ENCODE measurements at regions of chr7 and their contacts with region 1.

Region 1: GRCh38 chr7:53485354-53485753 is 449.9 kb downstream of the POM121L12 start:
- DNase-seq: no peak
- ATAC-seq: no peak
- H3K4me3 ChIP-seq: no peak overlapping the region
- H3K27ac ChIP-seq: no peak overlapping the region
- H3K4me1 ChIP-seq: no peaks in the 10 kb centered on the region
- H3K27me3 ChIP-seq: no peaks in the 10 kb centered on the region
- CTCF ChIP-seq: no peak

Region 2: DNA sequence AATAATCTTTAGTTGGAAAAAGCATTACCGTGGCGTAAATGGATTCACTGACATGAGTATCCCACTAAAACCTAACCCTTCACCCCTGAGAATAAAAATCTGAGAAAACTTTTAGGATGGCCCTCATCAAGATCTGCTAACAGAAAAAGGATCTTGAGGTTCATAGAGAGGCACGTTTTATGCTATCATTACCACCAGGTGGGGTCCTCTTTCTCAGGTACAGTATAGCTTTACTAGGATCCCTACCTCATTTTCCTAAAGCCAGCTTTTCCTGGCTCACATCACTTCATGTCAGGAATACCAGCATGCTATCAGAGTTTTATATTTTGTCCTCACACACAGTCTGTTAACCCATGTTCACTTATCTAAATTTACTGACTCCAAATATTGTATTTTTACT is 276.2 kb before region 1 on chr7:
- intact Hi-C with region 1: no loop called
- DNase-seq: no peak
- ATAC-seq: no peak
- H3K4me3 ChIP-seq: no peak overlapping the region
- H3K27ac ChIP-seq: no peak overlapping the region
- H3K4me1 ChIP-seq: no peaks in the 10 kb centered on the region
- H3K27me3 ChIP-seq: no peaks in the 10 kb centered on the region
- CTCF ChIP-seq: no peak

Region 3: DNA sequence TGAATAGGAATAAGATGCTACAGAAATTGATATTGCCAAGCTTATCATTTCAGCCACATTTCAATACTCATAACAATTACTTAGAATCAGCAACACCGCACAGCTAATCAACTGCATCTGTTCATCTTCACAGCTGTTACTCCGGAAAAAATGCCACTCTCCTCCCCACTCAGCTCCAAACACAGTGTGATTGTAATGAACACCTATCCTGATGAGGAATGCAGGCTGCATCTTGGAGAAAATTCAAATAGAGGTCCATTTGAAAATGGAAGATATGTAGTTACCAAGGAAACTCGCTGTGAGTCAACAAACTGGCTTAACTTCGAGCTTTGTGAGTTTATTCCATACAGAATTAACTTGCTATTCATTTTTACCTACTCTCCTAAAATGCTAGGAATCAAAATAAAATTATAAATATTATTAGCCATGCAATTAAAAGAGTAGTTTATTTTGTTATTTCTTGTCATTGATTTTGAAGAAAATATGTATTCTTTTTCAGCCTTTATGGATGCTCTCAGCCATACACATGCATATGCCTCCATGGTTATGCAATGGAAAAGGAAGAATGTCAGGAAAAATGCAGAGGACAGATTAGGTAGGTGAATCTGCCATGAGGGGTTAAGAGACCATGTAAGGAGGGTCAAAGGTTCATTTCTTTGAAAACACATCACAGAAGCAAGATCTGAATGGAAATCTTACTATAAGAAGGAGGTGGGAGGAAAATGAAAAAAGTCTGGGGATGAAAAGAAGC is 182.7 kb before region 1 on chr7:
- intact Hi-C with region 1: no loop called
- DNase-seq: no peak
- ATAC-seq: no peak
- H3K4me3 ChIP-seq: no peak overlapping the region
- H3K27ac ChIP-seq: no peak overlapping the region
- H3K4me1 ChIP-seq: no peaks in the 10 kb centered on the region
- H3K27me3 ChIP-seq: no peaks in the 10 kb centered on the region
- CTCF ChIP-seq: no peak

Region 4: DNA sequence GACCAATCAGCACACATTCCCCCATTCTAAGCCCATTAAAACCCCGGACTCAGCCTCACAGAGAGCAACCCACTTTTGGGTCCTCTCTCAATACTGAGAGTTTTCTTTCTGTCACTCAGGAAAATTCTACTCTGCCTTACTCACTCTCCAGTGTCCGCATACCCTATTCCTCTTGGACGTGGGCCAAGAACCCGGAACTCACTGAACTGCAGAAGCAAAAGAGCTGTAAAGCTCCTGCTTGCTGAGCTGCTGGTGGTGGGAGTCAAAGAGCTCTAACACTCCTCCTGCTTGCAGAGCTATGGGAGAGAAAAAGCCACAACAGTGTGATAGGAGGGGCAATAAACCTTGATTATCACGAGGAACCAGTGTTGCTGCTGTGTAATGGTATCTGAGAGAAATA is 63.1 kb before region 1 on chr7:
- intact Hi-C with region 1: loop called in 1 of 10 experiments (anchors 10 kb)
- DNase-seq: no peak
- ATAC-seq: no peak
- H3K4me3 ChIP-seq: no peak overlapping the region
- H3K27ac ChIP-seq: no peak overlapping the region
- H3K4me1 ChIP-seq: no peaks in the 10 kb centered on the region
- H3K27me3 ChIP-seq: no peaks in the 10 kb centered on the region
- CTCF ChIP-seq: no peak

Region 5: DNA sequence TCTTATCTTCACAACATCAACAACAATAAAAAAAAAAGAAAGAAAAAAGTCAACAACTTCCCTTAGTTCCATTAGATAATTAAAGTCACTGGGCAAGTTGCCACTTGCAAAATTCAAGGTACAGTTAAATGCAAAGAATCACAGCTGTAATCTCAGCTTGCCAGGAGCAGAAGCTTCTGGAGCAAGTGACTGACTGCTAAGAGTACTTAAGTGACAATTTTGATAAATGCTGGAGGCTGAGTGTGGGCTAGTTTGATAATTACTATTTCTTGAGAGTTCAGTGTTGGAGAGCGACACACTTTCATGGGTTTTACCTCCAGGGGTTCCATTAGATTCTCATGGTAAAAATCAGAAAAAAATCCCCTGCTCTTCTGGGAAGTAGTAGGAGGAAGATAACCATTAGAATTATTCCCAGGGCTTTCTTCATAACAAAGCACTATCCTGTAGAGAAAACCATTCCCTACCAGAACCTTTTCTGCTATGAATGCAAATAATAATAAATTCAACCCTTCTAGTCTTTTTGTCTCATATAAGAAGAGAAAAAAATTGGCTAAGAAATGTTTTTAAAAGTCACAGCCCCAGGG is 36.3 kb after region 1 on chr7:
- intact Hi-C with region 1: loop called in 1 of 10 experiments (anchors 1 kb)
- DNase-seq: no peak
- ATAC-seq: no peak
- H3K4me3 ChIP-seq: no peak overlapping the region
- H3K27ac ChIP-seq: no peak overlapping the region
- H3K4me1 ChIP-seq: no peaks in the 10 kb centered on the region
- H3K27me3 ChIP-seq: no peaks in the 10 kb centered on the region
- CTCF ChIP-seq: no peak

Measured in heart right ventricle (tissue), 16 donors.